ENCODE measurements at regions of chr12 and their contacts with region 1.

Region 1: GRCh38 chr12:91382081-91382543 is 199.5 kb upstream of the DCN start:
- DNase-seq: peak; percentile 7 to 75
- ATAC-seq: peak; percentile 64 to 89; a peak in 5 of 6 replicates
- H3K4me3 ChIP-seq: no peak overlapping the region
- H3K27ac ChIP-seq: peak overlapping the region; percentile 8 to 24; a peak in 1 of 6 replicates
- H3K4me1 ChIP-seq: peaks cover 4% of the 10 kb centered on the region; the same call in 1 of the 3 replicates
- CTCF ChIP-seq: peak; percentile 92
- EP300 ChIP-seq: no peak
- POLR2A ChIP-seq: no peak
- RAD21 ChIP-seq: peak; percentile 96 to 97

Region 2: GRCh38 chr12:91326058-91327027 is 55.8 kb before region 1 on chr12:
- CTCF ChIA-PET with region 1: no interaction called
- POLR2A ChIA-PET with region 1: no interaction called
- DNase-seq: peak; percentile 24 to 33
- ATAC-seq: peak in 1 of 2 experiments; percentile 68; a peak in 2 of 6 replicates
- H3K4me3 ChIP-seq: no peak overlapping the region
- H3K27ac ChIP-seq: no peak overlapping the region
- H3K4me1 ChIP-seq: no peaks in the 10 kb centered on the region
- CTCF ChIP-seq: peak; percentile 73
- EP300 ChIP-seq: no peak
- POLR2A ChIP-seq: no peak
- RAD21 ChIP-seq: peak; percentile 51 to 57

Region 3: GRCh38 chr12:91400271-91400670 is 18.2 kb after region 1 on chr12:
- CTCF ChIA-PET with region 1: interaction called, 12 read pairs
- POLR2A ChIA-PET with region 1: no interaction called
- DNase-seq: no peak
- ATAC-seq: no peak
- H3K4me3 ChIP-seq: no peak overlapping the region
- H3K27ac ChIP-seq: no peak overlapping the region
- H3K4me1 ChIP-seq: no peaks in the 10 kb centered on the region
- CTCF ChIP-seq: no peak
- EP300 ChIP-seq: no peak
- POLR2A ChIP-seq: no peak
- RAD21 ChIP-seq: no peak

Region 4: GRCh38 chr12:91811481-91812287 is 429.6 kb after region 1 on chr12:
- CTCF ChIA-PET with region 1: interaction called, 12 read pairs
- POLR2A ChIA-PET with region 1: no interaction called
- DNase-seq: peak; percentile 33 to 69
- ATAC-seq: peak in 1 of 2 experiments; percentile 85; a peak in 3 of 6 replicates
- H3K4me3 ChIP-seq: no peak overlapping the region
- H3K27ac ChIP-seq: peak overlapping the region in 1 of 2 experiments; percentile 40; a peak in 2 of 6 replicates
- H3K4me1 ChIP-seq: no peaks in the 10 kb centered on the region
- CTCF ChIP-seq: peak; percentile 87
- EP300 ChIP-seq: no peak
- POLR2A ChIP-seq: no peak
- RAD21 ChIP-seq: peak; percentile 73 to 82

Region 5: GRCh38 chr12:92562063-92562734 is 1180.1 kb after region 1 on chr12:
- CTCF ChIA-PET with region 1: interaction called, 10 read pairs
- POLR2A ChIA-PET with region 1: no interaction called
- DNase-seq: no peak
- ATAC-seq: no peak
- H3K4me3 ChIP-seq: no peak overlapping the region
- H3K27ac ChIP-seq: peak overlapping the region; percentile 7 to 23; a peak in 2 of 6 replicates
- H3K4me1 ChIP-seq: peaks cover 31% of the 10 kb centered on the region
- CTCF ChIP-seq: no peak
- EP300 ChIP-seq: no peak
- POLR2A ChIP-seq: no peak
- RAD21 ChIP-seq: no peak

Region 6: DNA sequence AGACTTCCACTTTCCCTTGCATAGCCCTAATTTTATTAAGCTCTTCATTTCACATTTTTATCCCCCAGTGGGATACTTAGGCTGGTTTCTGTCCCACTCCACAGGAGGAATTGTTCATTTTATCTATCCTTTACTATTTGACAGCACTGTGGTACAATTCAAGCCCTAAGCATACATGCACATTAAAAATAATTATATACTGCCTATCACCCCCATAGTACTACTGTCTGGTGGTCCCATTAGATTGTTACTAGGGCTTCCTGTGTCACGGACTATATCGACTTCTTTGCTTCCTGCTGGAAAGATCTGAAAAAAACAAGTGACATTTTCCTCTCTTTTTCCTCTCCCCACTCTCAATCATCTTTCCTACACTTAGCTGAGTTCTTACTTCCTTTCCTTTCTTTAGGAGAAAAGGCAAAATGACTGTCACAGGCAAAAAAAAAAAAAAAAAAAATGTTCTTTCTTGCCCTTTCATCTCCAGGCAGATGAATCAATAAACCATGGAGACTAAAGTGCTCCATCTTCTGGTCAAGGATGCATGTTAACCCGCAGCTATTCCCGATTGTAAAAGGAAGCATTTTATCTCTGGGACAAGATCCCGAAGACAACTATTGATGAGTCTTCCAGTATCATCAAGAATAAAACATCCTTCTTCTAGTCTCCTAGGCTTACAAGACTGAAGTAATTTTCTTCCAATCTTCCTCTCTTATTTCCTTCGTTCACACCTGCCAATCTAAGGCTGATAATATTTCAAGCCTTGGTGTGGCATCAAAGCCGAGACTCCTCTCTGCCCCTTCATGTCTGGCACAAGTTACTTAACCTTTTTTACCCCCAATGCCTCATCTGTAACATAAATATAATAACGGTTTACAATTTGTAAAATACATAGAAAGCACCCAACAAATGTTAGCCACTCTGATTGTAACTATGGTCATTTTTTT is 1226.3 kb after region 1 on chr12:
- CTCF ChIA-PET with region 1: interaction called, 12 read pairs
- POLR2A ChIA-PET with region 1: no interaction called
- DNase-seq: peak; percentile 27 to 76
- ATAC-seq: peak; percentile 54 to 69; a peak in 3 of 6 replicates
- H3K4me3 ChIP-seq: no peak overlapping the region
- H3K27ac ChIP-seq: peak overlapping the region; percentile 78 to 98
- H3K4me1 ChIP-seq: peaks cover 23% of the 10 kb centered on the region
- CTCF ChIP-seq: peak; percentile 67
- EP300 ChIP-seq: no peak
- POLR2A ChIP-seq: no peak
- RAD21 ChIP-seq: peak; percentile 75 to 82

Region 7: GRCh38 chr12:92656911-92657310 is 1274.8 kb after region 1 on chr12:
- CTCF ChIA-PET with region 1: interaction called, 32 read pairs
- POLR2A ChIA-PET with region 1: no interaction called
- DNase-seq: no peak
- ATAC-seq: no peak
- H3K4me3 ChIP-seq: no peak overlapping the region
- H3K27ac ChIP-seq: no peak overlapping the region
- H3K4me1 ChIP-seq: no peaks in the 10 kb centered on the region
- CTCF ChIP-seq: no peak
- EP300 ChIP-seq: no peak
- POLR2A ChIP-seq: no peak
- RAD21 ChIP-seq: no peak

Measured in A549 (cell line).